ENCODE measurements at regions of chr6 and their contacts with region 1.

Region 1: GRCh38 chr6:87237804-87238203 is 82.4 kb downstream of the ZNF292 start:
- DNase-seq: peak; percentile 4
- H3K4me3 ChIP-seq: no peak overlapping the region
- H3K27me3 ChIP-seq: no peaks in the 10 kb centered on the region
- CTCF ChIP-seq: peak; percentile 55

Region 2: DNA sequence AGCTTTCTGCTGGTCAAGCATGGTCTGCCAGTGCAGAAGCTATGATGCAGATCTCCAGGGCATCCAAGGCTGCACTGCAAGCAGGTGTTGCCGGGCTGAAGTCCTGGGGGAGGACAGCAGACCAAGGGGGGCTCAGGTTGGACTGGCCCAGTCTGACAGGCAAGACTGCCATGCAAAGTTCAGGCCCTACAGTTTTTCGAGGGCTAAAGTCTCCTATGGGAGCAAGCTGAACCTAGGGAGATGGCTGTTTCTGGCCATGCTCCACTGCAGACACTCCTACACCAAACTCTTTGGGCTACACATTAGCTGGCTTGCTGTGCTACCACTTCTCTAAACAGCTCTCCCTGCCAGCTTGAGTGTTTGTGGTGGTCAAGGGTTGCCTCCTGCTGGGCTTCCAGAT is 1465.2 kb before region 1 on chr6:
- CTCF ChIA-PET with region 1: no interaction called
- POLR2A ChIA-PET with region 1: no interaction called
- DNase-seq: no peak
- H3K4me3 ChIP-seq: no peak overlapping the region
- H3K27me3 ChIP-seq: no peaks in the 10 kb centered on the region; the same call in 1 of the 2 replicates
- CTCF ChIP-seq: no peak

Region 3: DNA sequence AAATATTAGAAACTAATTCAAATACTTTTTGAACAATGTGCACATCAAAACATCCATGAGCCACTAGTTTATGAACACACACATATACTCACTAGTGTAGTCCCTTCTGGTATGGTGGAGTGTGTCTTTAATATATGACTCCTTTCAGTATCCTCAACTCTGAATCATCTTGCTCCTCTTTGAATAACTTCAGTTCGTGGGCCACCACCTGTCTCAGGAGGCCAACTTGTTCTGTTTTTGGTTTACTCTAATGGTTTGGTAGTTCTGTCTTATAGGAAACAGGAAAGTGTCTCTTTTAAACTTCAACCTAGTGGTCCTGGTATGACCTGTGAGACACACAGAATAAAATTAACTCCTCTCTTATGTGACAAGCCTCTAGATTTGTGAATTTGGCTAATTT is 26.8 kb before region 1 on chr6:
- CTCF ChIA-PET with region 1: no interaction called
- POLR2A ChIA-PET with region 1: no interaction called
- DNase-seq: no peak
- H3K4me3 ChIP-seq: no peak overlapping the region
- H3K27me3 ChIP-seq: no peaks in the 10 kb centered on the region
- CTCF ChIP-seq: no peak

Region 4: GRCh38 chr6:87251225-87251624 is 13.4 kb after region 1 on chr6:
- CTCF ChIA-PET with region 1: interaction called, 3 read pairs
- POLR2A ChIA-PET with region 1: interaction called, 13 read pairs
- DNase-seq: no peak
- H3K4me3 ChIP-seq: no peak overlapping the region
- H3K27me3 ChIP-seq: no peaks in the 10 kb centered on the region
- CTCF ChIP-seq: no peak

Region 5: GRCh38 chr6:87277123-87277522 is 39.3 kb after region 1 on chr6:
- CTCF ChIA-PET with region 1: no interaction called
- POLR2A ChIA-PET with region 1: interaction called, 11 read pairs
- DNase-seq: no peak
- H3K4me3 ChIP-seq: no peak overlapping the region
- H3K27me3 ChIP-seq: no peaks in the 10 kb centered on the region
- CTCF ChIP-seq: no peak

Region 6: GRCh38 chr6:87494761-87495422 is 257.1 kb after region 1 on chr6:
- CTCF ChIA-PET with region 1: no interaction called
- POLR2A ChIA-PET with region 1: no interaction called
- DNase-seq: no peak
- H3K4me3 ChIP-seq: no peak overlapping the region
- H3K27me3 ChIP-seq: no peaks in the 10 kb centered on the region
- CTCF ChIP-seq: no peak

Measured in BJ (cell line).